Mucosa of descending colon (tissue), 3 donors: ENCODE measurements at regions of chr6 and their contacts with region 1.

Region 1: DNA sequence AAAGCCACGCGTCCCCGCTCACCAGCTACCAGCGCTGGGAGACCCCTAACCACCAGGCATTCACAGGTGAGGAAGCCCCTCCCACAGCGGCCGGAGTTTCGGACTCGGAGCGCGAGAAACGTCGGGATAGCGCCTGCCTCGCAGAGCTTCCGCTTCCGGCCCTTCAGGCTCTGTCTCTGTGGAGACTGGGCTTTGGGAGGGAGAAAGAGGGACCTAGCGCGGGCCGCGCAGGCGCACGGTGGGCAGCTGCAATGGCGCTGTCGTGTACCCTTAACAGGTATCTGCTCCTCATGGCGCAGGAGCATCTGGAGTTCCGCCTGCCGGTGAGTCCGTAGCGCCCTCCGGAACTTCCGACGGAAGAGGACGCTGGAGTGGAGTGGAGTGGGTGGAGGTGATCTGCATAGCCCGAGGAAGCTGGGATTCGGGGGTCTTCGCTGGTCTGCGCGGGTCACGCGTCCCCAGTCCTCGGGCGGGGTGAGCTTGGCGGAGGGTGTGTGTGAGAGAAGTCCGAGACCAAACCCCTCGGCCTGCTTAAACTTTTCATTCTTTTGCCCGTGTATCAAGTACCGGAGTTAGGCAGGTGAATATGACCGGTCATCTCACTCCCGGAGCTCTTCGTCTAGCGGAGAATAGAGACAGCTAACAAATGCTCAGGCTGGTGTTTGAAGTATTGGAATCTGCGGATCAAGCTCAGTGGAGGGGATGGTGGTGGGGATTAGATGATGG is at the start of gene TRMT11:
- DNase-seq: peak; percentile 89 to 92 (median 91)
- ATAC-seq: peak; percentile 97
- H3K4me3 ChIP-seq: peak within 1 kb of the TSS; percentile 58
- H3K4me1 ChIP-seq: peaks cover 15% of the 10 kb centered on the region
- CTCF ChIP-seq: no peak
- total RNA-seq, gene TRMT11: 20.7 to 22.7 (median 21.5) TPM

Region 2: DNA sequence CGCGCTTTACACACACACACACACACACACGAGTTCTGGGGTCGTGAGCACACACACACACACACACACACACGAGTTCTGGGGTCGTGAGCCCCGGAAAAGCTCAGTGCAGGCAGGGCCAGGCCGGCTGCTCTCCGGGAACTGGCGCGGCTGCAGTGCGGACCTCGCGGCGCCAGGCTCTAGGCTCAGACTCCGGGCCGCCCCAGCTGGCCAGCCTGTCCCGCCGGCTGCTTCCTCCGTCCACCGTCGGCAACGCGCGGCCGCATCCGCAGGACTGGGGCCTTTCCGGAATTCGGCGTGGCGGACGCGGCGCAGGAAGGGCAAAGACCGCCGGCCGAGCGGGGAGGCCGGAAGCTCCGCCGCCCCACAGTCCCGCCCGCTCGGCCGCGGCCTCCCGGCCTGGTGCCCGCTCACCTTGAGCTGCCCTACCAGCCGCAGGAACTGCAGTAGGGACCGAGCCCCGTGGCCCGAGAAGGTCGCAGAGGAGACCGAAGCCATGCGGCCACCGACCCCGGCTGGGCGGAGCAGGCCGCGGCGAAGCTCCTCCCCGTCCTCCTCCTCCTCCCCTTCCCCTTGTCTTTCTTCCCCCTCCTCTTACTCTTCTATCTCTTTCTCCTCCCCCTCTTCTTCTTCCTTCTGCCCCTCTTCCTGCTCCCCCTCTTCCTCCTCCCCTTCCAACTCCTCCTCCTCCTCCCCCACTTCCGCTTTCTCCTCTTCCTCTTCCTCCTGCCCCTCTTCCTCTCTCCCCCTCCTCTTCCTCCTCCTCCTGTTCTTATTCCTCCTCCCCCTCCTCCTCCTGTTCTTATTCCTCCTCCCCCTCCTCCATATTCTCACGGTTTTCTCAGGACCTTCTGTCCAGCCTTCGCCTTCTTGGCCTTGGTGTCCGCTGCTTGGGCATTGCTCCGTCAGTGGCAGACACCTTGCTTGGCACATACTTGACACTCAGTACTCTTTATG is 684.8 kb before region 1 on chr6 and contains the start of gene HDDC2:
- intact Hi-C with region 1: loop called in 1 of 2 experiments (anchors 10 kb)
- DNase-seq: peak; percentile 68 to 84 (median 80)
- ATAC-seq: peak; percentile 93
- H3K4me3 ChIP-seq: peak within 1 kb of the TSS; percentile 60
- H3K4me1 ChIP-seq: peaks cover 6% of the 10 kb centered on the region
- CTCF ChIP-seq: no peak
- total RNA-seq, gene HDDC2: 39.9 to 64.2 (median 56.7) TPM